ENCODE measurements at regions of chr7 and their contacts with region 1.

Region 1: DNA sequence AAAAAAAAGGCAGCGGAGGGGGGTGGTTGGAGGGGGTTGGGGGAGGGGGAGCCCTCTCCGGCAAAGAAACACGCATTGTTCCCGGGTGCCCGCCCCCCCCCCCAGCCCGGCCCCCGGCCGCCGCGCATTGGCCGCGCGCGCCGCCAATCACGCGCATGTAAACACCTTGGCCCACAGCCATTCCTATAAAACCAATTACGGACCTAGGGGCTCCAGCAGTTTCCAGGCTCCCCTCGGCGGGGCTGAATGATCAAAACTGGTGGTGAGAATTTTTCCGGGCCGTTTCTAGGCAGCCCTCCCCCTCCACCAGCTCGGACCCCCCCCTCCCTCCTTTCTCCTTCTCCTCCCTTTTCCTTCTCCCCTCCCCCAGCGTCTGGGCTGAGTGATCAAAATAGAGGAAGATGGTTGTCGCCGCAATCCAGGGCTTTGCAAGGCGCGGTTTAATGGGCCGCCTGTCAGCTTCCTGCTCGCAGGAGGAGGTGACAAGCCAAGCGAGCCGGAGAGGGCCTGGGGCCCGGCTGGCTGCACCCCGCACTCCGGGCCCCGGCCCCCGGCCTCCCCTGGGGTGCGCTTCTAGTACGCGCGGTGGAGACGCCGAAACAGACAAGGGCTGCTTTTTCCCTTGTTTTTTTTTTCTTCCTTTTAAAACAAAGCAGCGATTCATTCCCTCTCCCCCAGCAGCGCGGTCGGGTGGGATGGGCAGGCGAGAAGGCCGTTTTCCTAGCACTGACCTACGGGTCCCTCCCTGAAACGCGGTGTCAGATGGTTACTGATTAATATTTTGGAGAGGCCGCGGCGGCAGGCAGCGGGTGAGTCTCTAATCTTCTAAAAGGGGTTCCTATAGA is 432 bp upstream of the TNRC18 start:
- DNase-seq: peak; percentile 93 to 98
- H3K4me3 ChIP-seq: peak overlapping the region; percentile 96
- H3K27ac ChIP-seq: peak overlapping the region; percentile 94
- H3K4me1 ChIP-seq: peaks cover 3% of the 10 kb centered on the region
- H3K27me3 ChIP-seq: no peaks in the 10 kb centered on the region
- CTCF ChIP-seq: no peak

Region 2: DNA sequence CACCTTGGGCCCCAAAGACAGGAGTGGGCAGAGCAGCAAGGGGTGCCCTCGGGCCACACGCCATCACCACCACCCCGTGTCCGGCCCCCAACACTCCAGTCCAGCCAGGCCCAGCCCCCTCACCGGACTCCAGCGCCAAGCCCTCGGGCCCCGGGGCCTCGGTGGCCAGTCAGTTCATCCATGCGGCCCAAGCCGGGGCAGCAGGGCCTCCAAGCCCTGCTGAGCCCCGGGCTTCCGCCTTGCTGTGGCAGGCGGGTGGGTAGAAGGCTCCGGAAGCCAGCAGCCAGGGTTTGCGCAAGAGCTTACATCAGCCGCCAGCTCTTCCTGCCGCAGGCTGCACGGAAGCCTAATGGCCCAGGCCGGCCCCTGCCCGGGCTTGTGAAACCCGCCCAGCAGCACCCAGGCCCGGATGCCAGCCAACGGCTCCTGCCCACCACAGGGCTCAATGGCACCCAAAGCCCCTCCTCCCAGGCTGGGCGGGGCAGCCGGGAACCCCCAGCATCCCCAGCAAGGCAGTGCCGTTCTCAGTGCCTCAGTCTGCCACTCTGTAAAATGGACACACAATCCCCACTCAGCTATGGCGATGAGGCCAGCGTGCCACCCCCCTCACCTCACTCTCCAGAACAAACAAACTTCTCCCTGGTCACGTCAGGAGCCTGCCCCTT is 26.9 kb before region 1 on chr7:
- CTCF ChIA-PET with region 1: no interaction called
- POLR2A ChIA-PET with region 1: interaction called, 11 read pairs
- intact Hi-C with region 1: no loop called
- DNase-seq: peak; percentile 97 to 98
- H3K4me3 ChIP-seq: peak overlapping the region; percentile 84
- H3K27ac ChIP-seq: peak overlapping the region; percentile 75
- H3K4me1 ChIP-seq: peaks cover 18% of the 10 kb centered on the region
- H3K27me3 ChIP-seq: no peaks in the 10 kb centered on the region
- CTCF ChIP-seq: no peak

Region 3: GRCh38 chr7:5514440-5515035 is 90.5 kb after region 1 on chr7:
- CTCF ChIA-PET with region 1: no interaction called
- POLR2A ChIA-PET with region 1: interaction called, 21 read pairs
- intact Hi-C with region 1: no loop called
- DNase-seq: peak; percentile 29 to 81
- H3K4me3 ChIP-seq: peak overlapping the region; percentile 90
- H3K27ac ChIP-seq: peak overlapping the region; percentile 97
- H3K4me1 ChIP-seq: peaks cover 36% of the 10 kb centered on the region
- H3K27me3 ChIP-seq: no peaks in the 10 kb centered on the region
- CTCF ChIP-seq: no peak; the same call in 1 of the 2 replicates

Region 4: GRCh38 chr7:6283391-6284390 is 859.6 kb after region 1 on chr7:
- CTCF ChIA-PET with region 1: no interaction called
- POLR2A ChIA-PET with region 1: interaction called, 14 read pairs
- intact Hi-C with region 1: no loop called
- DNase-seq: peak; percentile 90 to 93
- H3K4me3 ChIP-seq: peak overlapping the region; percentile 48; the same call in 1 of the 2 replicates
- H3K27ac ChIP-seq: peak overlapping the region; percentile 100
- H3K4me1 ChIP-seq: peaks cover 35% of the 10 kb centered on the region
- H3K27me3 ChIP-seq: no peaks in the 10 kb centered on the region
- CTCF ChIP-seq: no peak